ENCODE measurements at regions of chr12 and their contacts with region 1.

Region 1: DNA sequence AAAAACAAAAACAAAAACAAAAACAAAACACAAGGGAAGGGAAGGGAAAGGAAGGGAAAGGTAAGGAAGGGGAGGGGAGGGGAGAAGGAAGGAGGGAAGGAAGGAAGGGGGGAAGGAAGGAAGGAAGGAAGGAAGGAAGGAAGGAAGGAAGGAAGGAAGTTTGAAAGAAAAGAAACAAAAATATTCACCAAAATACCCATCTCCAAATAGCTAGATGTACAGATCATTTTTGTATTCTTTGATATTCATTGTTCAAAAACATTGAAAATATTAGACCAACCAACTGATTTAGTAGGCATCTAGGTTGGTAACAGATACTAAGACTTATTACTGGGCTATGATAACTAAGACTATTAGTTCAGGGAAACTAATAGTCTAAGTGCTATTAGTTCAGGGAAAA is 39.1 kb upstream of the USP15 start:
- DNase-seq: no peak
- ATAC-seq: no peak

Region 2: DNA sequence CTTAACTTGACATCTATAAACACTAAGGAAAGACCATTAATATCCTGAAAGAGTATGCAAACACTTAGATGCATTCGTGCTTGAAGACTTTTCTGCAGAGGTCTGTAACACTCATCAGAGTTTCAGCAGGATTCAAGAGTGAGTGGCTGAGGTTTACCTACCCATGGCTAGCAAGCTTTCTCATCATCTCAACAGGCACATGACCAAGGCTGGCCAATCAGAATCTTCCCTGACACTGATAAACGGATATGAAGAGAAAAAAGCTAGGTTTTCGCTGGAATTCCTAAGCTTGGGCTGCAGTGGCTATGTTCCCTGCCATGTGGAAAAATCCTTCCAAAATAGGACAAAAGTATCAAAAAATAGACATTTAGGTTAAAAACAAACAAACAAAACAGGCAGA is 123.0 kb before region 1 on chr12:
- intact Hi-C with region 1: no loop called
- DNase-seq: no peak
- ATAC-seq: no peak

Region 3: GRCh38 chr12:63982604-63983295 is 1761.6 kb after region 1 on chr12:
- intact Hi-C with region 1: loop called (anchors 5 kb)
- DNase-seq: no peak
- ATAC-seq: no peak